Activated CD8-positive, alpha-beta T cell treated with anti-CD3 and anti-CD28 coated beads for 36 hours (primary cell): ENCODE measurements at regions of chr12 and their contacts with region 1.

Region 1: DNA sequence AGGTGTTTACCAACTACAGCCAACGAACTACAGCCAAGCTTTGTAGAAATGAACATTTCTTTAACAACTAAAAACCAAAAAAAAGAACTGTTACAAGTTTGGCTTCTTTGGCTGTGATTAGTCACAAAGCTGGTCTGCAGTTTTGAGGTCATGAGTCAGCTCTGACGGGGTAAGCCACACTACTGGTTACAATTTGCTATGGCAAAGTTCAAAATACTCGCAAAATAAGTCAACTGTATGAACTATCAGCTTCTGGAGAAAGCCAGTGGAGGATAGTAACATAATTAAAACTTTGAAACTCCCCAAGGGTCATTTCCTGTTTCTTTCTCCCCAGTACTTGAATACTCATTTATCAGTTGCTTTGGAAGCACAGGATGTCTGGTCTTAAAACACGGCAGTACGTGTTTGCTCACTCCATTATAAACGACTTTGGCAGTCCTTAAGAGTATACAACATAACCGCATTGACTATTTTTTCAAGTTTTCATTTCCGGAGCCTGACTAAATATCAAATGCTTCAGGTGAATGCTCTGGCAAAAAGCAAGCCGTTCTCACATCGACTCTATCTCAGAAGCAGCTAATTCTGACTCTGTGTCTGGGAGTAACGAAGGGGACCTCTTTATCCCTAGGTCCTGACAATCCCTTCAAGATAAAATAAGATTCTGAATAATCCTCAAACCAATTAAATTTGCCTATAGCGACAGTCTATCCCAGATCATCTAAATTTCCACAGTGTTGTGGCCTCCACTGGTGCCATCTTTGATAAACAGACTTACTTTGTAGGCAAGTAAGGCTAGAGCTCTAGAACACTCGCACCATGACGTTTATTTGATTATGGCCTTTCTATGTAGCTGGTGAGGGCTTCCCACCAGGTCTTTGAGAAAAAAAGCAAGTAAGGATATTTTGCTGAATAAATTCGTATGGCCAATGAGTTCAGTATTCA is 10.6 kb downstream of the PHLDA1 start:
- DNase-seq: peak; percentile 92
- ATAC-seq: peak; percentile 80
- H3K4me3 Mint-ChIP-seq: peak overlapping the region; percentile 54
- H3K27ac Mint-ChIP-seq: peak overlapping the region; percentile 99
- H3K4me1 Mint-ChIP-seq: peaks cover 62% of the 10 kb centered on the region
- H3K27me3 Mint-ChIP-seq: no peaks in the 10 kb centered on the region
- CTCF ChIP-seq: no peak

Region 2: DNA sequence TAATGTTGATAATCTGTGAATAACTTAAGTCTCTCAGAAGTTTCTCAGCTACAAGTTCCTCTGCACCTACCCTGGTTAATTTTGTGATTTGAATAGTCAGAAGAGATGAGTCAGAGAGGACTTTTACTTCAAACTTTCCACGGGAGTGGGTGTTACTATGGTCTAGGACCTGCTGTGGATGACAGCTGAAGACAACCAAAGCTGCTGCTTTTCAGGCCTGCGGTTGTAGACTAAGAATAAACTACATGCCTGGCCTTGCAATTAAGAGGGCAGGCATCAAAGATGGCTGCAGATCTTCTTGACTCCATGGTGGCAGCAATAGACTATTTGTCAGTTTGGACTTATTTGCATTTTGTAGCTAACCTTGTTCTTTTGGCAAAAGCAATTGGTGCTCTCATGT is 282.5 kb before region 1 on chr12:
- CTCF ChIA-PET with region 1: no interaction called
- POLR2A ChIA-PET with region 1: interaction called, 3 read pairs
- intact Hi-C with region 1: loop called (anchors 5 kb)
- DNase-seq: peak; percentile 70
- ATAC-seq: peak; percentile 94
- H3K4me3 Mint-ChIP-seq: no peak overlapping the region
- H3K27ac Mint-ChIP-seq: peak overlapping the region; percentile 14
- H3K4me1 Mint-ChIP-seq: peaks cover 34% of the 10 kb centered on the region
- H3K27me3 Mint-ChIP-seq: peaks cover 20% of the 10 kb centered on the region
- CTCF ChIP-seq: no peak

Region 3: DNA sequence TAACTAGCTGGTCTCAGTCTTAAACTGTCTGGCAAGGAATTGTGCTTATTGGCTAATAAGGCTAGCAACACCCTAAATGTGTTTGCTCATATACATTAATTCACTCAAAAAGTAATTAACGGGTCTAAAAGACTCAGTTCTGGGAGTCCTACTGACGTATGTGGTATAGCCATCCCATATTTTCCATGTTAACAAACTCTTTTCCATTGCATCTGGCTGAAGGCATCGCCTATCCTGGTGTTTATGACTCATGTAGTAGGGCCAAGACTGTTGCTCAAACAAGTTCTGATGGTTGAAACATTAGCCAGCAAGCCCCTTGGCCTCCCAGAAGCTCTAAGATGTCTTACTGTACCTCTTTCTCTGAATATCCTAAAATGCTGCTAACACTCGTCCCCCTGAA is 87.9 kb before region 1 on chr12:
- CTCF ChIA-PET with region 1: no interaction called
- POLR2A ChIA-PET with region 1: interaction called, 4 read pairs
- intact Hi-C with region 1: loop called (anchors 2 kb)
- DNase-seq: no peak
- ATAC-seq: no peak
- H3K4me3 Mint-ChIP-seq: no peak overlapping the region
- H3K27ac Mint-ChIP-seq: no peak overlapping the region
- H3K4me1 Mint-ChIP-seq: peaks cover 34% of the 10 kb centered on the region
- H3K27me3 Mint-ChIP-seq: peaks cover 3% of the 10 kb centered on the region
- CTCF ChIP-seq: no peak

Region 4: DNA sequence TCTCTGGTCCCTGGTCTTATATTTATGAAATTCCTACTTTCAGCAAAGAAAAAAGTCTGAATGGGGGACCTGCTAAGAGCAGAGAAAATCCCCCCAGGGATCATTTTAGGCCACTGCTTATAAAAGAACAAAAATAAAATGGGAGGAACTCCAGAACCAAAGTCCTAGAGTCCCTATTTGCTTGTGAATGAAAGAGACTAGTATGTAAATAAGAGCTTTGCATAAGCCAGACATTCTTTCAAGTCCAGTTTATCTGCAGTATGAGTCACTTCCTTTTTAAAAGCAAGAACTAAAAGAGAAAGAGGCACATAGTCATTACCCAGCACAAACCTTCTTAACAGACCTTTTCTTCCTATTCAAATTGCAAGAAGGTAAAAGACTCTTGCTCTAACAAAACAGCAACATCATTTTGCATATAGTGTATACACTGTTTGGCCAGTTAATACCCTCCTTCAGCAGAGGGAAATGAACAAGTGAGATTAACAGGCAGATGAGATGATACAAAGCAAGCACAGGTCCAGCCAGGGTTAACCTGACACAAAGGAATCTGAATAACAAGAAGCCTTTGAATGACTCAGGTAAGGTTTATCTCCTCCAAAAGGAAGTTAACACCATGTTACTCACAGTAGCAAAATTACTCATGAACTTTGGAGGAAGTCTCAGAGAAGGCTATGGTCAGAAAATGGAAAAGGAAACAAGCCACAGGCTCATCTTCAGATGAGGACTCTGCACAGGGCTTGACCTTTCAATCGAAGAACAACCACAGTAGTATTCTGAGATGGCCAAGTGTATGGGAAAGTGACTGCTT is 76.7 kb before region 1 on chr12:
- CTCF ChIA-PET with region 1: interaction called, 4 read pairs
- POLR2A ChIA-PET with region 1: interaction called, 9 read pairs
- intact Hi-C with region 1: loop called (anchors 1 kb)
- DNase-seq: peak; percentile 42
- ATAC-seq: peak; percentile 88
- H3K4me3 Mint-ChIP-seq: peak overlapping the region; percentile 55
- H3K27ac Mint-ChIP-seq: peak overlapping the region; percentile 96
- H3K4me1 Mint-ChIP-seq: peaks cover 32% of the 10 kb centered on the region
- H3K27me3 Mint-ChIP-seq: no peaks in the 10 kb centered on the region
- CTCF ChIP-seq: no peak

Region 5: GRCh38 chr12:75955251-75955650 is 65.8 kb before region 1 on chr12:
- CTCF ChIA-PET with region 1: no interaction called
- POLR2A ChIA-PET with region 1: no interaction called
- intact Hi-C with region 1: no loop called
- DNase-seq: no peak
- ATAC-seq: no peak
- H3K4me3 Mint-ChIP-seq: no peak overlapping the region
- H3K27ac Mint-ChIP-seq: no peak overlapping the region
- H3K4me1 Mint-ChIP-seq: peaks cover 30% of the 10 kb centered on the region
- H3K27me3 Mint-ChIP-seq: peaks cover 2% of the 10 kb centered on the region
- CTCF ChIP-seq: no peak

Region 6: GRCh38 chr12:75994186-75994731 is 26.7 kb before region 1 on chr12:
- CTCF ChIA-PET with region 1: interaction called, 4 read pairs
- POLR2A ChIA-PET with region 1: interaction called, 8 read pairs
- intact Hi-C with region 1: loop called (anchors 1 kb)
- DNase-seq: peak; percentile 63
- ATAC-seq: peak; percentile 81
- H3K4me3 Mint-ChIP-seq: no peak overlapping the region
- H3K27ac Mint-ChIP-seq: peak overlapping the region; percentile 69
- H3K4me1 Mint-ChIP-seq: peaks cover 51% of the 10 kb centered on the region
- H3K27me3 Mint-ChIP-seq: peaks cover 4% of the 10 kb centered on the region
- CTCF ChIP-seq: no peak

Region 7: GRCh38 chr12:76106631-76107030 is 85.6 kb after region 1 on chr12:
- CTCF ChIA-PET with region 1: no interaction called
- POLR2A ChIA-PET with region 1: no interaction called
- intact Hi-C with region 1: no loop called
- DNase-seq: no peak
- ATAC-seq: no peak
- H3K4me3 Mint-ChIP-seq: no peak overlapping the region
- H3K27ac Mint-ChIP-seq: no peak overlapping the region
- H3K4me1 Mint-ChIP-seq: no peaks in the 10 kb centered on the region
- H3K27me3 Mint-ChIP-seq: peaks cover 1% of the 10 kb centered on the region
- CTCF ChIP-seq: no peak